K562 (cell line): ENCODE measurements at regions of chr7 and their contacts with region 1.

Region 1: GRCh38 chr7:47991741-47992311 is 12.4 kb upstream of the HUS1 start:
- DNase-seq: peak; percentile 33 to 74 (median 53)
- ATAC-seq: peak; percentile 100
- H3K4me3 ChIP-seq: no peak overlapping the region
- H3K27ac ChIP-seq: no peak overlapping the region; the same call in 2 of the 3 replicates
- H3K4me1 ChIP-seq: peaks cover 0 to 8% of the 10 kb centered on the region in 2 experiments; a peak in 2 of 5 replicates
- H3K27me3 ChIP-seq: no peaks in the 10 kb centered on the region
- CTCF ChIP-seq: peak; percentile 50 to 67 (median 63)
- EP300 ChIP-seq: no peak
- POLR2A ChIP-seq: no peak
- RAD21 ChIP-seq: peak; percentile 72 to 77

Region 2: DNA sequence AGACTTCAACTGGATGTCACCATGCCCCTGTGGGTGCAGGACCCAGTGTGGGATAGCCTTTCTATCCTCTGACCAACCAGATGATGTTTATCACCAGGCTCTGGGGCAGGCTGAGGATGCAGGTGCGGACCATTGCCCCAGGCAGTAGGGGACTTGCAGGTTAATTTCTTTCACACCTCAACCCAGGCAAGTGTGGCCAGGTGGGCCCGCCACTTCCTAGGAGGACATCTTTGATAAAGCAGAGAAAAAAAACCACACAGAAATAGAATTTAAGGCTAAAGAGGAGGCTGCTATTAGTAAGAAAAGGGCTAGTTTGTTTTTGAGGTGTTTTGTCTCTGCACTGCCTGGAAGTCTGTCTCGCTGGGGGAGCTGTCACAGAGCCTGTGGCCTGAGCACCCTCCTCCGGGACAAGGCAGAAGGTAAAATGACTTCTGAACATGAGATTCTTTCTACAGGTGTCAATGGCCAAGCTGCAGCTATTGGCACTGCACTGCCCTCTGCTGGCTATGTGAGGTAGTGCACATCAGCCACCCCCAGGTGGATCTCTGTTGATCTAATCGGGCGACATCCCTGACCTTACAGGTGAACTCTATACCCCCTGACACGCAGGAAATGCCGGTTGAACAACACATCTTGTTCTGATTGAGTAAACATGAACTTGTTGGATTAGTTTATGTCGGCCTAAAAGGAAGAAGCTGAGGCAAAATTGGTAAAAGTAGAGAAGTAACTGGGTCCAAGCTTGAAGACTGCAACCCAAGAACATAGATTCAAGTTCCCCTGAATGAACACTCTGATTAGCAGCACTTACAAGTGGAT is 118.2 kb after region 1 on chr7:
- CTCF ChIA-PET with region 1: interaction called, 6 read pairs
- POLR2A ChIA-PET with region 1: no interaction called
- in situ Hi-C with region 1: no loop called
- intact Hi-C with region 1: loop called (anchors 1 kb)
- DNase-seq: peak; percentile 67 to 84 (median 75)
- ATAC-seq: peak; percentile 82
- H3K4me3 ChIP-seq: no peak overlapping the region
- H3K27ac ChIP-seq: no peak overlapping the region
- H3K4me1 ChIP-seq: peaks cover 0 to 4% of the 10 kb centered on the region in 2 experiments; a peak in 1 of 5 replicates
- H3K27me3 ChIP-seq: peaks cover 0 to 33% of the 10 kb centered on the region in 2 experiments; a peak in 2 of 5 replicates
- CTCF ChIP-seq: peak; percentile 83 to 95 (median 90)
- EP300 ChIP-seq: no peak
- POLR2A ChIP-seq: no peak
- RAD21 ChIP-seq: peak; percentile 93 to 97

Region 3: DNA sequence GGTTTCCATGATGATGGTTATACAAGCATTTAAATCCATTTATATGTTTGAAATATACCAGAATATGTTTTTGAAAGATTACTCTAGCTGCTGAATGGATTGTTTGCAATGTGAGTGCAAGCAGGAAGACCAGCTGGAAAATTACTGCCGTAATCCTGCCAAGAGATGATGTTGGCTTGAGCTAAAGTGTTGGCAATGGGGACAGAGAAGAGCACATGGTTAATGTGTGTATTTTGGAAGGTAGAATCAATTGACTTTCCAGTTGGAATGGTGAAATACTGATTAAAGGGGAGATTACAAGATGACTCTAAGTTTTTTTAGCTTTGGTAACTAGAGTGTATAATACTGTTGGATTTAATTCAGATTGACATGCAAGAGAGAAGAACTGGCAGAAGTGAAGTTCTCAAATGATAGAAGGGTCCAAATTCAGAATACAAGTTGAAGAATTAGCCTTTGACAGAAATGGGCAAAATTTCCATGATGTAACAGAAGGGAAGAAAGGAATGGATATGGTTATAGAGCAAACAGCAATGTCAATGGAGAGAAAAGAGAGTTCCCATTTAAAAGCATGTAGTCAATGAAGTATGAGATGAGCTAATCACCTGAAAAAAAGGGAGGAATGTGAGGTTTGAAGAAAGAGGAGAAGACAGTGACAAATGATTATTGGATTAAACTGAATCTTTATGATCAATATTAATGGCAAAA is 1354.5 kb after region 1 on chr7:
- CTCF ChIA-PET with region 1: no interaction called
- POLR2A ChIA-PET with region 1: no interaction called
- in situ Hi-C with region 1: no loop called
- intact Hi-C with region 1: no loop called
- DNase-seq: no peak
- ATAC-seq: no peak
- H3K4me3 ChIP-seq: no peak overlapping the region
- H3K27ac ChIP-seq: no peak overlapping the region
- H3K4me1 ChIP-seq: no peaks in the 10 kb centered on the region
- H3K27me3 ChIP-seq: no peaks in the 10 kb centered on the region
- CTCF ChIP-seq: no peak
- EP300 ChIP-seq: no peak
- POLR2A ChIP-seq: no peak
- RAD21 ChIP-seq: no peak